ENCODE measurements at regions of chr11 and their contacts with region 1.

Region 1: DNA sequence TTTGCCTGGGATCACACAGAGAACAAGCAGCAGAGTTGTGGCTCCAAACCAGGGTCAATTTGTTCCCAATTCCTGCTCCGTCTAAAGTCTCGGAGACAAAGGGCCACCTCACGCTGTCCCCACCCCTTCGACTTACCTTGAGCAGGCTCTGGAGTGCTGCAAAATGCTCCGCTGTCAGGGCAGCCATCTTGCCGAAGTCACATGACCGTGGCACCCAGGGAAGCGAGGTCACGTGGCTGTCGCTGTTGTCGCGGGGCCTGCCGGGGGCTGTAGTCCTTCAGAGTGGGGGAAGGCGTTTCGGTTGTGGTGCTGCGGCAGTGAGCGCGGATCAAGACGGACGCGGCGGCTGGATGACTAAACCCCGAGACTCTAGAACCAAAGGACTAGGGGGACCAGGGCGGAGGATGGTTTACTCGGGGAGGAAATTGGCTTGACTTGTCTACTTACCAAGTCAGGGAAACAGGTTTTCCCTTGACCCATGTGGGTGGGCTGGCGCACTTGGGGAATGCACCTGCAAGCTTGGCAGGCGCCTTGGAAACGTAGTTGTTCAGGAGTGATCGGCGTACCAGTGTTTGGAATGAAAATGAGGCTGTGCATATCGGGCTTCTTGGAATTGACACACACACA is at the start of gene COMMD9:
- DNase-seq: peak; percentile 89 to 97 (median 92)
- ATAC-seq: peak; percentile 97
- H3K4me3 ChIP-seq: peak within 1 kb of the TSS; percentile 72
- H3K4me3 Mint-ChIP-seq: peak within 1 kb of the TSS; percentile 94
- H3K27ac ChIP-seq: no peak within 1 kb of the TSS
- H3K27ac Mint-ChIP-seq: peak within 1 kb of the TSS; percentile 73
- H3K4me1 ChIP-seq: peaks cover 11% of the 10 kb centered on the region
- H3K4me1 Mint-ChIP-seq: peaks cover 43% of the 10 kb centered on the region
- H3K27me3 ChIP-seq: no peaks in the 10 kb centered on the region
- H3K27me3 Mint-ChIP-seq: no peaks in the 10 kb centered on the region
- CTCF ChIP-seq: no peak
- total RNA-seq, gene COMMD9: 33.6 to 34.6 TPM

Region 2: DNA sequence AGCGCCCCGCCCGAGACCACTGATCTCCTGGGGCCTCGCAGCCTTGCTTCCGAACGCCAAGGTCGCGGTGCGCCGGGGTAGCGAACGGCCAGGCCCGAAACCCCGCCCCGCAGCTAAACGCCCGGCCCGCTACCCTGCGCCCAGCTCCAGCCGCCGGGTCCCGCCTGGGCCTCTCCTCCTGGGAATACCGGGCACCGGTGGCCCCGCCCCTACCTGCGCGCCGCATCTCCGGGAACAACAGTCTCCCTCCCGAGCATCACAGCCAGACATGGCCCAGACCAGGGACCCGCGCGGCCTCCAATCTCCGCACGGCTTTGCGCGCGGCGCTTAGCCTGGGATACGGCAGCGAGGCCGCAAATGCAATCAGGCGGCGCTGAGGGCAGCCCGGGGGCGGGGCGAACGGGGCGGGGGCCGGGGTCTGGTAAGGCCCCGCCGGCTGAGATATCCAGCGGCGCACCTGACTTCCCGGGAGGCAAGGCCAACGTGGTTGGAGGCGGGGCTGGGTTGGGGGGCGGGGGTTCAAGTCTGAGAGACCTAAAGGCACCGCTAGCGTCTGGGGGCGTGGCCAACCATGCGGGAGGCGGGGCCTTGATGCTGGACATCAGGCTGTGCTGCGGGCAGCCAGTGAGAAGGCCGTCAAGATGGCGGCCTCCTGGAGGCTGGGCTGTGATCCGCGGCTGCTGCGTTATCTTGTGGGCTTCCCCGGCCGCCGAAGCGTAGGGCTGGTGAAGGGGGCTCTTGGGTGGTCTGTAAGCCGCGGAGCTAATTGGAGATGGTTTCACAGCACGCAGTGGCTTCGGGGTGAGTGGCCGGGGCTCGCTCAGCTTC is 1373.1 kb before region 1 on chr11 and contains the starts of genes APIP and PDHX:
- CTCF ChIA-PET with region 1: no interaction called
- POLR2A ChIA-PET with region 1: no interaction called
- intact Hi-C with region 1: loop called in 1 of 2 experiments (anchors 10 kb)
- DNase-seq: peak; percentile 91 to 99 (median 95)
- ATAC-seq: peak; percentile 90
- H3K4me3 ChIP-seq: peak within 1 kb of the TSS; percentile 94
- H3K4me3 Mint-ChIP-seq: peak within 1 kb of the TSS; percentile 96
- H3K27ac ChIP-seq: peak within 1 kb of the TSS; percentile 80 to 93
- H3K27ac Mint-ChIP-seq: peak within 1 kb of the TSS; percentile 93
- H3K4me1 ChIP-seq: peaks cover 24% of the 10 kb centered on the region
- H3K4me1 Mint-ChIP-seq: peaks cover 57% of the 10 kb centered on the region
- H3K27me3 ChIP-seq: no peaks in the 10 kb centered on the region
- H3K27me3 Mint-ChIP-seq: no peaks in the 10 kb centered on the region
- CTCF ChIP-seq: no peak
- total RNA-seq, gene APIP: 7.1 to 8.3 TPM
- total RNA-seq, gene PDHX: 17.3 to 17.4 TPM

Region 3: GRCh38 chr11:36249246-36249645 is 40.1 kb before region 1 on chr11:
- CTCF ChIA-PET with region 1: no interaction called
- POLR2A ChIA-PET with region 1: no interaction called
- intact Hi-C with region 1: no loop called
- DNase-seq: no peak
- ATAC-seq: no peak
- H3K4me3 ChIP-seq: no peak overlapping the region
- H3K4me3 Mint-ChIP-seq: no peak overlapping the region
- H3K27ac ChIP-seq: no peak overlapping the region
- H3K27ac Mint-ChIP-seq: no peak overlapping the region
- H3K4me1 ChIP-seq: no peaks in the 10 kb centered on the region
- H3K4me1 Mint-ChIP-seq: no peaks in the 10 kb centered on the region
- H3K27me3 ChIP-seq: peaks cover 12 to 17% of the 10 kb centered on the region in 2 experiments
- H3K27me3 Mint-ChIP-seq: peaks cover 72% of the 10 kb centered on the region
- CTCF ChIP-seq: no peak

Region 4: DNA sequence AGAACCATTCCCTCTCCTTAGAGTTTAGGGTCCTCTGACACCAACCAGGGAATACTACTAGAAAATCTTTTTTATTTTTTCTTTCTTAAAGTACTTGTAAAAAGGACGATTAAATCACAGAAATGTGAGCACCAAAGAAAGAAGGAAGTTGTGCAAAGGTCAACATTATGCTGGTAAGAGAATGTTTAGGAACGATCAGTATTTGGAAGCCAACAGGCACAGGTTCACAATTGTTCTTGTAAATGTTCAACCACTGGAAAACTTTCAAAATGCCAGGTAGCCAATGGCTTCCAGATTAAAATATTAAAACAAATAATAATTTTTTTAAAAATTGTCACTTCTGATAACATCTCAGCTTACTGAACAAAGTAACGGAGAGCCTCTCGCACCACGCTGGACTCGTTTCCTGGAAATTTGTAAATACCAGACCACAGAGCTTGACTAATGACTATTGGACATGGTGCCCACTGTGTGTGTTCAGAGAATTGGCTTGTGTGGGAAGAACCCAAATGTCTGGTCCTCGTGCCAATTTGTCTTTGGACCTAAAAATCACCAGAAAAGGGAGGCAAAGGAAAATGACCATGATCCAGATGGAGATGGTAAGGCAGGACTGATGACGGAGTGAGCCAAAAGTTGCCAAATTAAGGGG is 20.9 kb before region 1 on chr11:
- CTCF ChIA-PET with region 1: no interaction called
- POLR2A ChIA-PET with region 1: no interaction called
- intact Hi-C with region 1: no loop called
- DNase-seq: no peak
- ATAC-seq: no peak
- H3K4me3 ChIP-seq: no peak overlapping the region
- H3K4me3 Mint-ChIP-seq: no peak overlapping the region
- H3K27ac ChIP-seq: no peak overlapping the region
- H3K27ac Mint-ChIP-seq: no peak overlapping the region
- H3K4me1 ChIP-seq: peaks cover 2% of the 10 kb centered on the region
- H3K4me1 Mint-ChIP-seq: no peaks in the 10 kb centered on the region
- H3K27me3 ChIP-seq: no peaks in the 10 kb centered on the region
- H3K27me3 Mint-ChIP-seq: no peaks in the 10 kb centered on the region
- CTCF ChIP-seq: no peak

Region 5: GRCh38 chr11:36478700-36479329 is 189.5 kb after region 1 on chr11:
- CTCF ChIA-PET with region 1: interaction called, 12 read pairs
- POLR2A ChIA-PET with region 1: no interaction called
- intact Hi-C with region 1: loop called (anchors 1 to 2 kb)
- DNase-seq: peak in 5 of 14 experiments; percentile 7 to 70 (median 56)
- ATAC-seq: no peak
- H3K4me3 ChIP-seq: no peak overlapping the region
- H3K4me3 Mint-ChIP-seq: no peak overlapping the region
- H3K27ac ChIP-seq: no peak overlapping the region
- H3K27ac Mint-ChIP-seq: no peak overlapping the region
- H3K4me1 ChIP-seq: peaks cover 2% of the 10 kb centered on the region
- H3K4me1 Mint-ChIP-seq: peaks cover 2% of the 10 kb centered on the region
- H3K27me3 ChIP-seq: no peaks in the 10 kb centered on the region
- H3K27me3 Mint-ChIP-seq: no peaks in the 10 kb centered on the region
- CTCF ChIP-seq: peak; percentile 57

Region 6: GRCh38 chr11:36509694-36510566 is 220.6 kb after region 1 on chr11 and contains the start of gene TRAF6:
- CTCF ChIA-PET with region 1: interaction called, 6 read pairs
- POLR2A ChIA-PET with region 1: interaction called, 6 read pairs
- intact Hi-C with region 1: loop called in 1 of 2 experiments (anchors 5 kb)
- DNase-seq: peak; percentile 78 to 94 (median 87)
- ATAC-seq: peak; percentile 93
- H3K4me3 ChIP-seq: peak within 1 kb of the TSS; percentile 92
- H3K4me3 Mint-ChIP-seq: peak within 1 kb of the TSS; percentile 99
- H3K27ac ChIP-seq: peak within 1 kb of the TSS; percentile 75 to 79
- H3K27ac Mint-ChIP-seq: peak within 1 kb of the TSS; percentile 84
- H3K4me1 ChIP-seq: peaks cover 21% of the 10 kb centered on the region
- H3K4me1 Mint-ChIP-seq: peaks cover 43% of the 10 kb centered on the region
- H3K27me3 ChIP-seq: peaks cover 0 to 3% of the 10 kb centered on the region in 2 experiments
- H3K27me3 Mint-ChIP-seq: peaks cover 10% of the 10 kb centered on the region
- CTCF ChIP-seq: peak; percentile 94
- total RNA-seq, gene TRAF6: 27.9 to 29.0 TPM

Region 7: DNA sequence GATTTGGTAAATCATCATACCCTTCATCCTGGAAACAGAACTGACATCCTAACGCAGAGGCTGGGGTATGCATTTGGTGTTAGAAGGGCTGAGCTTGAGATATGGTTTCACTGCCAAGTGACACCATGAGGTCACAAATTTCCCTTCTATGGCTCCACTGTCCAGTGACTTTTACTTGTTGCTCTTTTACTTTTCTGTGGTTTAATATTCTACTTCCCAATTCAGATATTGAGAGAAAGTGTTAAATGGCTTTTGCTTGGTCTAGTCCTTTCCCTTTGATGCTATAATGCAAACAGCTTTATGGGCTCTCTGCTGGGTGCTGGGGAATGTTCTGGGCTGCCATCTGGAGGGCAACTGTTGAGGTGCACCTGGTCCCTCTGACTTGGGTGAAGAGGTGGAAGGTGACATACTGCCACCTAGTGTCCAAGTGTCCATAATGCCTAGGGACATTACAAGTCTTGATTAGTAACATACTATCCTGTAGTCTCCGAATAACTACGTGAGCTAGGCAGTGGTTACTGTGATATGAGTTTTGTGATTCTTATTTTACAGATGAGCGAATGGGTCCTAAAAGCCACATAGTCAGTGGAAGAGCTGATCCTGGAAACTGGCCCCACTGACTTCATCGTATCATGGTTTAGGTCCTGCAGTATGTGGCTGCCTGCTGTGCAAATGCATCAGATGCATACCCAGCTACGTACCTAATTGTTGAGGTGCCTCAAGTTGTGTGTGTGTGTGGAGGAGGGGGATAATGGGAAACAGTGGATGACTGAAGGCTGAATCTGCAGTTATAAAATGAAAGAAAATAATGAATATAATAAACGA is 457.8 kb after region 1 on chr11:
- CTCF ChIA-PET with region 1: interaction called, 3 read pairs
- POLR2A ChIA-PET with region 1: no interaction called
- intact Hi-C with region 1: loop called in 1 of 2 experiments (anchors 10 kb)
- DNase-seq: peak; percentile 53 to 91 (median 70)
- ATAC-seq: peak; percentile 100
- H3K4me3 ChIP-seq: no peak overlapping the region
- H3K4me3 Mint-ChIP-seq: no peak overlapping the region
- H3K27ac ChIP-seq: no peak overlapping the region
- H3K27ac Mint-ChIP-seq: no peak overlapping the region
- H3K4me1 ChIP-seq: no peaks in the 10 kb centered on the region
- H3K4me1 Mint-ChIP-seq: peaks cover 5% of the 10 kb centered on the region
- H3K27me3 ChIP-seq: peaks cover 3 to 5% of the 10 kb centered on the region in 2 experiments
- H3K27me3 Mint-ChIP-seq: peaks cover 38% of the 10 kb centered on the region
- CTCF ChIP-seq: peak; percentile 96

Measured in CD4-positive, alpha-beta T cell (primary cell).